B cell (primary cell): ENCODE measurements at regions of chr17 and their contacts with region 1.

Region 1: GRCh38 chr17:13594762-13595598 is 6.7 kb downstream of the HS3ST3A1 start:
- DNase-seq: peak; percentile 79
- ATAC-seq: peak; percentile 45
- H3K4me3 ChIP-seq: no peak overlapping the region
- H3K4me3 Mint-ChIP-seq: no peak overlapping the region
- H3K27ac ChIP-seq: no peak overlapping the region
- H3K27ac Mint-ChIP-seq: no peak overlapping the region
- H3K4me1 ChIP-seq: no peaks in the 10 kb centered on the region
- H3K4me1 Mint-ChIP-seq: peaks cover 3% of the 10 kb centered on the region
- H3K27me3 ChIP-seq: peaks cover 2 to 18% (median 9%) of the 10 kb centered on the region in 4 experiments
- H3K27me3 Mint-ChIP-seq: peaks cover 37% of the 10 kb centered on the region
- CTCF ChIP-seq: peak; percentile 91

Region 2: GRCh38 chr17:13851889-13852288 is 256.9 kb after region 1 on chr17:
- CTCF ChIA-PET with region 1: no interaction called
- POLR2A ChIA-PET with region 1: no interaction called
- intact Hi-C with region 1: no loop called
- DNase-seq: no peak
- ATAC-seq: no peak
- H3K4me3 ChIP-seq: no peak overlapping the region
- H3K4me3 Mint-ChIP-seq: no peak overlapping the region
- H3K27ac ChIP-seq: no peak overlapping the region
- H3K27ac Mint-ChIP-seq: no peak overlapping the region
- H3K4me1 ChIP-seq: peaks cover 0 to 4% of the 10 kb centered on the region in 2 donors
- H3K4me1 Mint-ChIP-seq: no peaks in the 10 kb centered on the region
- H3K27me3 ChIP-seq: no peaks in the 10 kb centered on the region
- H3K27me3 Mint-ChIP-seq: no peaks in the 10 kb centered on the region
- CTCF ChIP-seq: no peak

Region 3: DNA sequence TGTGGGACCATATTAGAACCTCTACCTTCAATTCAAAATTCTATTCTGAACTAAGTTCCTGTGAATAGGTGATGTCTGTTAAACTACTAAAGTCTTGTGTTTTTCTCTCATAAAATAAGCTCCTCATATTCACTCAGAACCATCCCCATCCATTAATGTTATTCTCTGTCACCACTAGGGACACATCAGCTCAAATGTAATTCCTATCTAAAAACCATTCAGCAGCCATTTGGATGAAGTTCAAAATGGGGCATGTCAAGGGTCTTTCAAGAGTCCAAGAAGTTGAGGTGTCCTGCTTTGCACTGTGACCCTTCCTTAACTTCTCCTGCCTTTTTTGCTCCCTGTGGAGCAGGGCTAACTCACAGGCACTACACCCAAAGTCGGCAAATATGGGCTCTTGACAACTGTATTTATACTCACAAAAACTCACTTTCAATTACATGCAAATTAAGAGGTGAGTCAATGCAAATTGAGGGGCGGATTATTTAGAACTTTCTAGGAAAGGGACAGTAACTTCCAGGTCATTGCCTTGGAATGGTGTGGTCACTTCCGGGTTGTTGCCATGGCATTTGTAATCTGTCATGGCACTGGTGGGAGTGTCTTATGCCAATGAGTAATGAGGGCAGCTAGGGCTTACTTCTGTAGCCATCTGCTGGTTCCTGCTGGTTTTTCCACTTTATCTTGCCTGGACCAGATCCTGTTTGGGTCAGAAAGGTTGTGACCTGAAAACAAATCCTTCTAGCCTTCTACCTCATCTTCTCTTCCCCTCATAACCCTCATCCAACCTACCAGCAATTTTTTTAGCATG is 346.1 kb after region 1 on chr17:
- CTCF ChIA-PET with region 1: interaction called, 9 read pairs
- POLR2A ChIA-PET with region 1: no interaction called
- intact Hi-C with region 1: loop called (anchors 5 kb)
- DNase-seq: no peak
- ATAC-seq: no peak
- H3K4me3 ChIP-seq: no peak overlapping the region
- H3K4me3 Mint-ChIP-seq: no peak overlapping the region
- H3K27ac ChIP-seq: no peak overlapping the region
- H3K27ac Mint-ChIP-seq: no peak overlapping the region
- H3K4me1 ChIP-seq: peaks cover 3 to 10% of the 10 kb centered on the region in 2 donors
- H3K4me1 Mint-ChIP-seq: peaks cover 18% of the 10 kb centered on the region
- H3K27me3 ChIP-seq: no peaks in the 10 kb centered on the region
- H3K27me3 Mint-ChIP-seq: no peaks in the 10 kb centered on the region
- CTCF ChIP-seq: no peak

Region 4: GRCh38 chr17:14553855-14554254 is 958.9 kb after region 1 on chr17:
- CTCF ChIA-PET with region 1: no interaction called
- POLR2A ChIA-PET with region 1: no interaction called
- intact Hi-C with region 1: loop called (anchors 10 kb)
- DNase-seq: no peak
- ATAC-seq: no peak
- H3K4me3 ChIP-seq: no peak overlapping the region
- H3K4me3 Mint-ChIP-seq: no peak overlapping the region
- H3K27ac ChIP-seq: no peak overlapping the region
- H3K27ac Mint-ChIP-seq: no peak overlapping the region
- H3K4me1 ChIP-seq: no peaks in the 10 kb centered on the region
- H3K4me1 Mint-ChIP-seq: peaks cover 3% of the 10 kb centered on the region
- H3K27me3 ChIP-seq: peaks cover 0 to 3% (median 0%) of the 10 kb centered on the region in 4 experiments
- H3K27me3 Mint-ChIP-seq: peaks cover 12% of the 10 kb centered on the region
- CTCF ChIP-seq: no peak

Region 5: DNA sequence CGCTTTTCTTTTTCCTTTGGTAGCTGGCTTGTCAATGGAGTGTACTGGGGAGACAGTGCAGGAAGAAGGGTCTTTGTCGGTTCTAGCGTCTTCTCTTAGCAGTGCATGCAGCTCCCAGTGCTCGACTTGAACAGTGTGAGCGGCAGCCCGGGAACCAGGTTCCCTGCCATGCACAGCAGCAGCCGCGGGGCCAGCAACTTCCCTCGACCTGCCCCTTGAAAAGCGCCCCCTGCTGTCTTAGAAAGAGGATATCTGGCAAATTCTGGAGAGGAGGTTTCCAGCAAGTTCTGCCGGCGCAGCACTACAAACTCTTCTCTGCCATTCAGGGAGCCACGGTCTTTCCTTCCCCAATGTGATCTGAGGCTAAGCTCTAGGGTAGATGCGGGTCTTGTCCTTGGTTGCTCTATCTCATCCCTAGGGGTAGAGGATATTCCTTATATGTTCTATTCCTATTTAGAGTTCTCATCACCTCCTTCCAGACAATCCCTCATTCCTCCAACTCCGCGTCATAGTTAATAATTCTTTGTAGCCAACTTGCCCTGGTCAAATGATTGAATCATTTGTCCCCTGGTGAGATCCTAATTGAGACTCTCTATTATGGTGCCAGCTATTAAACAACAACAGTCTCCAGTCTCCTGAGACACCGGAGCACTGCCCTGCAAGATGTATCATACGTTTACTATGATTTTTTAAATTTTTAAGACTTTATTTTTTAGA is 1218.8 kb after region 1 on chr17:
- CTCF ChIA-PET with region 1: no interaction called
- POLR2A ChIA-PET with region 1: no interaction called
- intact Hi-C with region 1: loop called (anchors 10 kb)
- DNase-seq: peak; percentile 4
- ATAC-seq: no peak
- H3K4me3 ChIP-seq: no peak overlapping the region
- H3K4me3 Mint-ChIP-seq: no peak overlapping the region
- H3K27ac ChIP-seq: no peak overlapping the region
- H3K27ac Mint-ChIP-seq: no peak overlapping the region
- H3K4me1 ChIP-seq: no peaks in the 10 kb centered on the region
- H3K4me1 Mint-ChIP-seq: no peaks in the 10 kb centered on the region
- H3K27me3 ChIP-seq: no peaks in the 10 kb centered on the region
- H3K27me3 Mint-ChIP-seq: peaks cover 23% of the 10 kb centered on the region
- CTCF ChIP-seq: peak; percentile 46

Region 6: DNA sequence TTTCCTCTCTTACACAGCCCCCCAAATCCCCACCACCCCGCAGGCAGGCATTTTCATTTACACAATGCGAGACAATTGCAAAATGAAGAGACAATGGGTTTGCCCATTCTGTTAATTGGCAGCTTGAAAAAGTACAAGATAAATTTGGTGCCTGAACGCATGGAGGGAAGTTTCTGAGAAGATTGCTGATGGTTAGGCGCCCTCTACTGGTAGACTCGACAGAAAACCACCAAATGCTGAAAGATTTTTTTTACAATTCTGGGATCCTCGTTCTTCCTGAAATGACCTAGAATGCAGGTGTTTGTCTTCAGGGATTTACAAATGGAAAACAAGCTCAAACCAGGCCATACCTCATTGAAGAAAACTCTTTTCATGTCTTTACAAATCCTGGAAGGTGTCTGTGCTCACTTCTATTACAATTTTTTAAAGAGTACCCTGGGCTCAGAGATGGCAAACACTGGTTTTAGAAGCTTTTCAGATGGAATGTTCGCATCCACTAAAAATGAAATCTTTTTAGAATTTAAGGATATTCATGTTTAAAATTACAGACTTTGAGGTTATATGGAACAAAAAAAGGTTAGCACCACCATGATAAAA is 1331.6 kb after region 1 on chr17:
- CTCF ChIA-PET with region 1: interaction called, 43 read pairs
- POLR2A ChIA-PET with region 1: no interaction called
- intact Hi-C with region 1: loop called (anchors 1 kb)
- DNase-seq: peak; percentile 68
- ATAC-seq: no peak
- H3K4me3 ChIP-seq: no peak overlapping the region
- H3K4me3 Mint-ChIP-seq: no peak overlapping the region
- H3K27ac ChIP-seq: no peak overlapping the region
- H3K27ac Mint-ChIP-seq: no peak overlapping the region
- H3K4me1 ChIP-seq: no peaks in the 10 kb centered on the region
- H3K4me1 Mint-ChIP-seq: no peaks in the 10 kb centered on the region
- H3K27me3 ChIP-seq: no peaks in the 10 kb centered on the region
- H3K27me3 Mint-ChIP-seq: peaks cover 24% of the 10 kb centered on the region
- CTCF ChIP-seq: peak; percentile 89

Region 7: GRCh38 chr17:15213381-15214087 is 1618.6 kb after region 1 on chr17:
- CTCF ChIA-PET with region 1: no interaction called
- POLR2A ChIA-PET with region 1: no interaction called
- intact Hi-C with region 1: loop called (anchors 10 kb)
- DNase-seq: peak; percentile 4
- ATAC-seq: no peak
- H3K4me3 ChIP-seq: no peak overlapping the region
- H3K4me3 Mint-ChIP-seq: no peak overlapping the region
- H3K27ac ChIP-seq: no peak overlapping the region
- H3K27ac Mint-ChIP-seq: no peak overlapping the region
- H3K4me1 ChIP-seq: no peaks in the 10 kb centered on the region
- H3K4me1 Mint-ChIP-seq: no peaks in the 10 kb centered on the region
- H3K27me3 ChIP-seq: no peaks in the 10 kb centered on the region
- H3K27me3 Mint-ChIP-seq: peaks cover 11% of the 10 kb centered on the region
- CTCF ChIP-seq: peak; percentile 23

Region 8: GRCh38 chr17:15502369-15503112 is 1907.6 kb after region 1 on chr17:
- CTCF ChIA-PET with region 1: interaction called, 3 read pairs
- POLR2A ChIA-PET with region 1: no interaction called
- intact Hi-C with region 1: loop called (anchors 5 kb)
- DNase-seq: peak; percentile 71
- ATAC-seq: peak; percentile 91
- H3K4me3 ChIP-seq: peak overlapping the region in 2 of 5 experiments; percentile 18 to 22
- H3K4me3 Mint-ChIP-seq: peak overlapping the region; percentile 69
- H3K27ac ChIP-seq: no peak overlapping the region
- H3K27ac Mint-ChIP-seq: no peak overlapping the region
- H3K4me1 ChIP-seq: peaks cover 13% of the 10 kb centered on the region in 2 donors
- H3K4me1 Mint-ChIP-seq: peaks cover 14% of the 10 kb centered on the region
- H3K27me3 ChIP-seq: no peaks in the 10 kb centered on the region
- H3K27me3 Mint-ChIP-seq: no peaks in the 10 kb centered on the region
- CTCF ChIP-seq: peak; percentile 83